ENCODE measurements at regions of chr11 and their contacts with region 1.

Region 1: DNA sequence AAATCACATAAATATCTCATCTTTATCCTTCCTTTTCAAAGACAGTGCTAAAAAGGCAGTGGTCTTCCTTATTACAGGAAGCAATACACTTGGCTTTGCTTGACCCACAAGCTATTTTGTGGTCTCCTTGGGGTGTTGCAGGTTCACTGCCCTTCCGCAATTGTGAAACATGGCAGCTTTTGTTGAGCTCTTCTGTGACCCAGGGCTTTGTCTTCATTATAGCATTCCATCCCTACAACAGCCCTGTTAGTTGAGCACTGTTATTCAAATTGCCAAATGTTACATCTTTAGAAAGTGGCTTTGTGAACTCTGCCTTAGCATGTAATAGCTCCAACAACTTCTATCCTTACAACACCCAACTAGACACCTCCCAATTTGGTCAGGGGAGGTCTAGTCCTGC is 107.1 kb downstream of the OPCML start:
- DNase-seq: no peak
- ATAC-seq: no peak

Region 2: GRCh38 chr11:132496341-132496740 is 928.9 kb before region 1 on chr11:
- intact Hi-C with region 1: no loop called
- DNase-seq: no peak
- ATAC-seq: no peak

Region 3: GRCh38 chr11:132858223-132858622 is 567.0 kb before region 1 on chr11:
- intact Hi-C with region 1: no loop called
- DNase-seq: no peak
- ATAC-seq: peak; percentile 45

Region 4: DNA sequence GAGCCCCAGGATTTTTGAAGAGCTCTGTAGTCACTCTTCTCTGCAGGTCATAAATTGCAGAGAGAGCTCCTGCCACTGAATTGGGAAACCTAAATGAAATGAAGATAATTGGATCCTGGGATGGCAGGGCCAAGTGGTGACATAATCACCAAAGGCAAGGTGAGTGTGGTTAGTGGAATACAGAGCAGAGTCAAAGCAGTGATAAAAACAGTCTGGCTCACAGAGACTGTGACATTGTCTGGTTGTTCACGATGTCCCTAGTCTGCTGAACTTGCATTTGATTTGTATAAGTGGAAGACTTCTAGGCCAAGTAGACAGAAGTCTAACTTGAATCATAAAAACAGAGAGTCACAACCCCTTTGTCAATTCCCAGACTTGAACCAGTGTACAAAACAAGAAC is 446.9 kb after region 1 on chr11:
- intact Hi-C with region 1: loop called (anchors 5 kb)
- DNase-seq: no peak
- ATAC-seq: no peak

Measured in sciatic nerve (tissue), 2 donors.